ENCODE measurements at regions of chr6 and their contacts with region 1.

Region 1: GRCh38 chr6:23435126-23435525 is 690.9 kb upstream of the NRSN1 start:
- DNase-seq: no peak
- H3K4me3 Mint-ChIP-seq: no peak overlapping the region
- H3K27ac Mint-ChIP-seq: no peak overlapping the region
- H3K4me1 Mint-ChIP-seq: no peaks in the 10 kb centered on the region
- H3K27me3 Mint-ChIP-seq: no peaks in the 10 kb centered on the region
- CTCF ChIP-seq: no peak

Region 2: GRCh38 chr6:22747571-22747970 is 687.6 kb before region 1 on chr6:
- CTCF ChIA-PET with region 1: interaction called, 3 read pairs
- intact Hi-C with region 1: loop called (anchors 10 kb)
- DNase-seq: no peak
- H3K4me3 Mint-ChIP-seq: no peak overlapping the region
- H3K27ac Mint-ChIP-seq: no peak overlapping the region
- H3K4me1 Mint-ChIP-seq: peaks cover 14% of the 10 kb centered on the region
- H3K27me3 Mint-ChIP-seq: no peaks in the 10 kb centered on the region
- CTCF ChIP-seq: no peak

Region 3: DNA sequence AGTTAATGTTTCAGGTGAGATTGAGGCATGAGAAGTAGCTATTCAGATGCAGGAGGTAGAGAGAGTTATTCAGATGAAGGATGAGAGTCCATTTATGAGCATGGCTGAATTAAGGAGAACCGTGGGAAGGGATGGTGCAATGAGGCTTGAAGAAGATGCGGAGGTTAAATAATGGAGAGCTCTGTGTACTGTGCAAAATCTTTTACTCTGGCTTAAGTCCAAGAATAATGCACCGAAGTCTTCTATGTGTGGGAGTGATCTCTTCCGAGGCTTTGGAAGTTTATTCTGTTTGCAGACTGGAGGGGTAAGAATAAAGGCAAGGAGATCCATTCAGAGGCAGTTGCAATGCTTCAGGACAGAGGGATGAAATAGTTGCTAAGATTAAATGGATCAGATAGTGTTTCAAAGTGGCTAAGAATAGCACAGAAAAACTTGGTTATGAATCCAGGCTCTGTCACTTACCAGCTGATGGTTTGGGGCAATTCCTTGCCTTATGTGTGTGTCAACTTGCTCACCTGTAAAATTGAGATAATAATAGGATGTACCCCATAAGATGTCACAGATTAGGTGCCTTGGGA is 398.6 kb before region 1 on chr6:
- CTCF ChIA-PET with region 1: no interaction called
- intact Hi-C with region 1: no loop called
- DNase-seq: no peak
- H3K4me3 Mint-ChIP-seq: no peak overlapping the region
- H3K27ac Mint-ChIP-seq: no peak overlapping the region
- H3K4me1 Mint-ChIP-seq: no peaks in the 10 kb centered on the region
- H3K27me3 Mint-ChIP-seq: no peaks in the 10 kb centered on the region
- CTCF ChIP-seq: no peak

Region 4: DNA sequence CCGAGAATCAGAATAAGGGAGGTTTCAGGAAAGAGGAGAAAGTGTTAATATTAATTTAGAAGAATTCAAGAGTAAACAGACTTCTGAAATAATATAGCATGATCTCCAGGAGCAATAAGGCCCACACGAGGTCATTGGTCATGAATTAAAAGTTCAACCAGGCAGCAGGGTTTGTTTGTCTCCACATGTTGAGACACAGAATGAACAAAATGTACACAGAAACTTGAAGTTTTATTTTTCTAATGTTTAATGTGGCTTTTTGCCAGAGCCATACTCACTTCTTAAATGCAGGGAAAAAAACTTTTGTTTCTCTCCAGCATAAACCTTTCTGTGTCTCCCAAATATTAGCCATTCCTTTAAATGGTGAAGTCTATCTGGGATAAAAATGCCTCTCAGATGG is 361.3 kb before region 1 on chr6:
- CTCF ChIA-PET with region 1: interaction called, 11 read pairs
- intact Hi-C with region 1: no loop called
- DNase-seq: no peak
- H3K4me3 Mint-ChIP-seq: no peak overlapping the region
- H3K27ac Mint-ChIP-seq: no peak overlapping the region
- H3K4me1 Mint-ChIP-seq: no peaks in the 10 kb centered on the region
- H3K27me3 Mint-ChIP-seq: no peaks in the 10 kb centered on the region
- CTCF ChIP-seq: no peak

Region 5: DNA sequence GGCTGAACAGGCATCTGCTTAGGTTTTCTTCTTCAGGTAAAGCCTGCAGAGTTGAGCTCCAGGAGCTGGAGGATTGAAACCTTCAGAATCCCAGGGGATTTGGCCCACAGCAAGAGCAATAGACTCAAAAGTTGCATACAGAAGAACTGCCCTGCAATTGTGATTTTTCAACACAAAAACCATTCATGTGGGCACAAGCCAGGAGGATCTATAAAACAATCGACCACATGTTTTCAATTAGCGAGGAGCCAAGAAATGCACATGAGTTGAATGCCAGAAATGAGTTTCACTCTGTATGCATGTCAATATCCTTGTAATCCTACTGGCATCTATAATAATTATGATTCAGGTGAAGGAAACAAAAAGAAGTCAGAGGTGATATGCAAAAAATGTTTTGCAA is 289.3 kb before region 1 on chr6:
- CTCF ChIA-PET with region 1: no interaction called
- intact Hi-C with region 1: no loop called
- DNase-seq: no peak
- H3K4me3 Mint-ChIP-seq: no peak overlapping the region
- H3K27ac Mint-ChIP-seq: no peak overlapping the region
- H3K4me1 Mint-ChIP-seq: no peaks in the 10 kb centered on the region
- H3K27me3 Mint-ChIP-seq: no peaks in the 10 kb centered on the region
- CTCF ChIP-seq: no peak

Region 6: DNA sequence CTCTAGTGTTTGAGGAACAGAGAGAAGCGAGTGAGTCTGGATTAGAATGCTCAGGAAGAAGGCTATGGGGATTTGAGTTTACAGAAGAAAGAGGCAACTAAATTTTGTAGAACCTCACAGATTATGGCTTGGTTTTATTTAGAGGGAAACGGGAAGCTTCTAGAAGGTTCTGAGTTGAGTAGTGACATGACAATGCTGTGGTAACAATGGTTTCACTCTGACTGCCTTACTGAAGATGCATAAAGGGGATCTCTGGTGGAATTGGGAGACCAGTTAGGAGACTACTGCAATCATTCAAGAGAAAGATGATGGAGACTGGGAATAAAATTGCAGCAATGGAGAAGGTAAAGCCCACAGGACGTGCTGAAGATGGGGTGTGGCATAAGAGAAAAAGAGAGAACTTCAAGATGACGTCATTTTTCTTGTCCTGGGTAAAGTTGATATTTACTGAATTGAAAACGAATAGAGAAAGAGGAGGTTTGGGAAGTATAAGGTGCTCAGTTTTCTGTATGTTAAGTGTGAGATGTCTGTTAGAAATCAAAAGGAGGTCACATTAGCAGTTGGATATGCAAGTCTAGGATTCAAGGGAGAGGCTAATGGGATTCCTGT is 19.2 kb before region 1 on chr6:
- CTCF ChIA-PET with region 1: no interaction called
- intact Hi-C with region 1: no loop called
- DNase-seq: no peak
- H3K4me3 Mint-ChIP-seq: no peak overlapping the region
- H3K27ac Mint-ChIP-seq: no peak overlapping the region
- H3K4me1 Mint-ChIP-seq: no peaks in the 10 kb centered on the region
- H3K27me3 Mint-ChIP-seq: no peaks in the 10 kb centered on the region
- CTCF ChIP-seq: no peak

Region 7: DNA sequence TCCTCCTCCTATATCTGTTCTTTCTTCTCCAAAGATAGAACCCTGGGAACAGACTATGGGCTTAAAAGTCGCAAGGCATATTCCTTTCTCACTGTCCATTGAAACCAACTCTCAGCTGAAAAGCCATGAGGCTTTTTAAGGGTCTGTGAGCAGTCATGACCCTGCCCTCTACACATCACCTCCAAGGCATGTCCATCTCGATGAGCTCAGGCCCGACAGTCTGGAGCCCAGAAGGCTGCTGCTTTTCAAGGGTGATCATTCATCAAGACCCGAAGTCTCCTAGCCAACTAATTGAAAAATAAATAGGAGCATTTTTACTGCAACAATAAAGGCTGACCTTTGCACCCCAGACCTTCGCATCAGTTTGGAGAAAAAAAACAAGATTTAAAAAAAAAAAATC is 312.1 kb after region 1 on chr6:
- CTCF ChIA-PET with region 1: no interaction called
- intact Hi-C with region 1: no loop called
- DNase-seq: no peak
- H3K4me3 Mint-ChIP-seq: no peak overlapping the region
- H3K27ac Mint-ChIP-seq: no peak overlapping the region
- H3K4me1 Mint-ChIP-seq: no peaks in the 10 kb centered on the region
- H3K27me3 Mint-ChIP-seq: no peaks in the 10 kb centered on the region
- CTCF ChIP-seq: no peak